ENCODE measurements at regions of chr13 and their contacts with region 1.

Region 1: DNA sequence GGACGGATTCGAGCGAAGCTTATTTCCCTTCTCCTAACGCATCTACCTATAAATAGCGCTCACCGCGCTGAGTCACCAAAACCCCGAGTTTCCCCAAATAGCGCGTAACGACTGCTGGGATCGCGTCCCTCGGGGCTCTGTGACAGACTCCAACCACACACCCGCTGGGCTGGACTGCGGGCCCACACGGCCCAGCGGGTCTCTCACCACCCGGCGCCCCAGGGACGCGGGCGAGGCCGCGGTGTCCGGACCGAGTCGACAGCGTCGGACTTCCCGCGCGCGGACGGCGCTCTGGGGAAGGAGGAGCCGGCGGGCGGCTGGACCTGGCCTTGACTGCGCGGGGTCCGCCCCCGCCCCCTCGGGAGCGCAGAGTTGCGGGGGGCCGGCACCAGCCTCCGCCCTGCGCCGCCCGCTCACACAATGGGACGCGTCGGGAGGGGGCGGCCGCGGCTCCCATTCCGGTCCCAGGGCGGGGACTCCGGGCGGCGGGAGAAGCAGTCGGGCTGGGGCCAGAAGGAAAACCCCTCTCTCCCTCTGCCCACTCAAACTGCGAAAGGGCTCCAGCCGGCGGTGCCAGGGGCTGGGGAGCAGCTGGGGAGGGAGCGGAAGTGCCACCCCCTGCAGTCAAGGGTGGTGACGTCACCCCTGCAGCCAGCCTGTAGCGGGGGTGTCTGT is 108.8 kb downstream of the KCNRG start:
- DNase-seq: peak; percentile 71 to 99
- H3K4me3 ChIP-seq: peak overlapping the region; percentile 45
- CTCF ChIP-seq: no peak
- POLR2A ChIP-seq: peak in 1 of 2 donors; percentile 91

Region 2: GRCh38 chr13:49042476-49042875 is 1081.5 kb before region 1 on chr13:
- intact Hi-C with region 1: no loop called
- DNase-seq: no peak
- H3K4me3 ChIP-seq: no peak overlapping the region
- CTCF ChIP-seq: no peak
- POLR2A ChIP-seq: no peak

Region 3: GRCh38 chr13:49996951-49997895 is 126.8 kb before region 1 on chr13 and contains the start of gene TRIM13:
- intact Hi-C with region 1: loop called (anchors 10 kb)
- DNase-seq: peak; percentile 87 to 98
- H3K4me3 ChIP-seq: peak within 1 kb of the TSS; percentile 77
- CTCF ChIP-seq: no peak
- POLR2A ChIP-seq: peak in 1 of 2 donors; percentile 42
- total RNA-seq, gene TRIM13: 19.4 to 39.2 (median 27.5) TPM

Region 4: GRCh38 chr13:50081679-50082425 is 42.1 kb before region 1 on chr13:
- intact Hi-C with region 1: loop called (anchors 5 kb)
- DNase-seq: peak; percentile 98 to 99
- H3K4me3 ChIP-seq: peak overlapping the region; percentile 72
- CTCF ChIP-seq: no peak
- POLR2A ChIP-seq: no peak

Measured in lower leg skin (tissue), 4 donors.